ENCODE measurements at regions of chr5 and their contacts with region 1.

Region 1: GRCh38 chr5:58498340-58498942 is 7.2 kb downstream of the GAPT start:
- DNase-seq: peak in 2 of 4 donors; percentile 42 to 58
- ATAC-seq: peak; percentile 79
- H3K4me3 ChIP-seq: no peak overlapping the region
- H3K27ac ChIP-seq: peak overlapping the region in 1 of 2 donors; percentile 79
- H3K4me1 ChIP-seq: peaks cover 0 to 28% of the 10 kb centered on the region in 2 donors
- H3K27me3 ChIP-seq: no peaks in the 10 kb centered on the region
- CTCF ChIP-seq: peak; percentile 68

Region 2: DNA sequence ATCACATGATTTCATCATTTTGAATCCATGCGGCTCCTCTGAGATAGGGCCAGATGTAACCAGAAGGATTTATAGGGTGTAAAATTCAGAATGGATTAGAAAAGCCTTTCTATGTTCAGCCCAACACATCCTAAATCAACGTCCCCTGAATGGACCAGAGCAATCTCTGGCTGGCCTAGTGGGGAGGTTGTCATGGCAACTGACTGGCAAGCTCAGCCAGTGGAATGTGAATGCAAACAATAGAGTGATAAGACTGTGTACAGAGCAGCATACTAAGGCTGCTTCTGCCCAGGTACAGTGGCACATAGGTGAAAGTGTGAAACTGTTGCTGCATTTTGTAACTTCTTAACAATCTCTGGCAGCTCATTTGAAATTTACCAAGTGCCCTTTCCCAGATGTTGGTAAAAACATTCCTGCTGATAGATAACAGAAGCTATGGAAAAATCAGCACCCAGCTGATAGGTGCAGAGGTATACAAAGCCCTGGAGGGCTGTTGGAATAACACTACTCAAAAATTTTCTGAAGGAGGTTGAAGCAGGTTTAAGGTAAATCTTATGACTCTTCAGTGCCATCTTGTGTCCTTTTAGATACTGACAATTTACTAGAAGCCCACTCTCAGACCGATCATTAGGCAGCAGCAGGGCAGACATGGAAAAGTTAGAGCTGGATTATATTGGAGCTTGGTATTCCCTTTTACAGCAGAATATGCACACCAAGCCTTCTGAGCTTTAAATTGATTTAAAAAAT is 351.7 kb after region 1 on chr5:
- intact Hi-C with region 1: loop called in 1 of 2 experiments (anchors 5 kb)
- DNase-seq: peak in 3 of 4 donors; percentile 54 to 83 (median 72)
- ATAC-seq: peak; percentile 91
- H3K4me3 ChIP-seq: no peak overlapping the region
- H3K27ac ChIP-seq: no peak overlapping the region
- H3K4me1 ChIP-seq: no peaks in the 10 kb centered on the region
- H3K27me3 ChIP-seq: no peaks in the 10 kb centered on the region
- CTCF ChIP-seq: peak; percentile 39 to 47

Measured in left lung (tissue), 14 donors.